ENCODE measurements at regions of chrX and their contacts with region 1.

Region 1: DNA sequence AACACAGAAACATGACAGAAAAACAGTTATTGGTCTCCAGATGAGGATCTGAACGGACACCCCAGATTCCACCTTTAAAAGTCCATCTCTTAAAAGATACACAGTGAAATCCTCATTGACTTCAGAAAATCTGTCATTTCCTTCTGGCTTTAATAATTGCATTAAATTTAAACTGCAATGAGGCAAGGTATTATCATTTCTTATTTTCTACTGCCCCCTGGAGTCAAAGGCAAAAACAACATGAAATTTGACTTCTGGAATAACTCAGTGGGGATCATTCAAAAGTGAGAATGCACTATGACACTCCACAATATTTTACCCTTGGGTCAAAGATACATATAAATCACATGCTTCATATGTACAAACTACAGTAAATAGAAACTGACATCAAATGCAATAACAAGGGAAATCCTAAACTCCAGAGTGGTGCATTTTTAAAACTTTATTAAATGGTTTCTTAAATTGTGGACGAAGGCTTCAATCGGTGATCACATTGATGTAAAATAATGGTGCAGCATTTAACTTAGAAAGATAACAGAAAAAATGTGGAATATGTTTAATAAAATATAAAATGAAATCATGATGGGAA is 56.4 kb upstream of the SPANXN1 start:
- DNase-seq: no peak
- ATAC-seq: peak; percentile 28; the same call in 1 of the 3 replicates
- H3K4me3 ChIP-seq: no peak overlapping the region
- H3K27ac ChIP-seq: no peak overlapping the region
- H3K4me1 ChIP-seq: no peaks in the 10 kb centered on the region
- H3K27me3 ChIP-seq: no peaks in the 10 kb centered on the region
- CTCF ChIP-seq: peak; percentile 33 to 50 (median 38); a peak in 4 of 6 replicates
- EP300 ChIP-seq: no peak
- POLR2A ChIP-seq: no peak
- RAD21 ChIP-seq: peak; percentile 66

Region 2: DNA sequence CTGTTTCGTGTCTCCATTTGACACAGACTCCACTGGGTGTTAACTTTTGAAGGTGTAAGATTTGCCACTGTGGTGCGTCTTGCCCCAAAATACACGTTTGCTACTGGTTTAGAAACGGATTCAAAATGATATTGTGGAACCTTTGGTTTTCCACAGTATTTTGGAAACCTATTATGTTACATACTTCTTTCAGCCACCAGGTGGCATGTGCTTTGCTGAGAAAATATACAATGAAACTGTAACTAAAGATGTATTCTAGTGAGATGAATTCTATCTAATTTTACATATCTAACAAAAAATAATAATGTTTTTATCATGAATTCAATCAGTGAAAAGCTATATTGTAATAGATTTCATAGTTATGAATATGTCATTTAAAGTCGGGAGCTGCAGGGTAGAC is 1526.6 kb before region 1 on chrX:
- CTCF ChIA-PET with region 1: no interaction called
- POLR2A ChIA-PET with region 1: no interaction called
- RAD21 ChIA-PET with region 1: no interaction called
- SMC1A ChIA-PET with region 1: no interaction called
- in situ Hi-C with region 1: loop called (anchors 5 kb)
- intact Hi-C with region 1: loop called (anchors 5 kb)
- DNase-seq: no peak
- ATAC-seq: peak; percentile 53; the same call in 2 of the 3 replicates
- H3K4me3 ChIP-seq: no peak overlapping the region
- H3K27ac ChIP-seq: no peak overlapping the region
- H3K4me1 ChIP-seq: no peaks in the 10 kb centered on the region
- H3K27me3 ChIP-seq: no peaks in the 10 kb centered on the region
- CTCF ChIP-seq: peak; percentile 41 to 52 (median 42); a peak in 5 of 6 replicates
- EP300 ChIP-seq: no peak
- POLR2A ChIP-seq: no peak
- RAD21 ChIP-seq: peak; percentile 46

Region 3: GRCh38 chrX:143669395-143669794 is 1521.5 kb before region 1 on chrX:
- CTCF ChIA-PET with region 1: no interaction called
- POLR2A ChIA-PET with region 1: no interaction called
- RAD21 ChIA-PET with region 1: no interaction called
- SMC1A ChIA-PET with region 1: no interaction called
- in situ Hi-C with region 1: loop called (anchors 5 kb)
- intact Hi-C with region 1: loop called (anchors 5 kb)
- DNase-seq: no peak
- ATAC-seq: no peak
- H3K4me3 ChIP-seq: no peak overlapping the region
- H3K27ac ChIP-seq: no peak overlapping the region
- H3K4me1 ChIP-seq: no peaks in the 10 kb centered on the region
- H3K27me3 ChIP-seq: no peaks in the 10 kb centered on the region
- CTCF ChIP-seq: peak in 2 of 3 experiments; percentile 2 to 13; a peak in 1 of 6 replicates
- EP300 ChIP-seq: no peak
- POLR2A ChIP-seq: no peak
- RAD21 ChIP-seq: no peak

Region 4: DNA sequence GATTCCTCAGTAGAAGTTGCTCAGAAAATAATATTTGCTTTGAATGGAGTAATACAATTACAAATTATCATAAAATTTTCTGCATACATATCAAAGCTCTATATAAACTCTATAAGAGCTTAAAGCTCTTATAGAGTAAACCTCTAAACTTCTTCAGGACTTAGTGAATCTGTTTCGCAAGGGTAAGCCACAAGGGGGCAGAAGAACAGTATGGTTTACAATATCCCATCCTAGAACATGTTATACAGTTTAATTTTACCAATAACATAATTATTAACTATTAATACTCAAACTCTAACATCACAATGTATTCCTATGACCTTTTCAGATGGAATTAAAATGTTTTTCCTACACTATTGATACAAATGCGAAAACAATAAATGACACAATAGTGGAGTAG is 22.6 kb after region 1 on chrX:
- CTCF ChIA-PET with region 1: no interaction called
- POLR2A ChIA-PET with region 1: no interaction called
- RAD21 ChIA-PET with region 1: no interaction called
- SMC1A ChIA-PET with region 1: no interaction called
- in situ Hi-C with region 1: no loop called
- intact Hi-C with region 1: no loop called
- DNase-seq: no peak
- ATAC-seq: peak; percentile 59; the same call in 2 of the 3 replicates
- H3K4me3 ChIP-seq: no peak overlapping the region
- H3K27ac ChIP-seq: no peak overlapping the region
- H3K4me1 ChIP-seq: no peaks in the 10 kb centered on the region
- H3K27me3 ChIP-seq: no peaks in the 10 kb centered on the region
- CTCF ChIP-seq: peak in 2 of 3 experiments; percentile 37 to 41; a peak in 4 of 6 replicates
- EP300 ChIP-seq: no peak
- POLR2A ChIP-seq: no peak
- RAD21 ChIP-seq: peak; percentile 42

Region 5: DNA sequence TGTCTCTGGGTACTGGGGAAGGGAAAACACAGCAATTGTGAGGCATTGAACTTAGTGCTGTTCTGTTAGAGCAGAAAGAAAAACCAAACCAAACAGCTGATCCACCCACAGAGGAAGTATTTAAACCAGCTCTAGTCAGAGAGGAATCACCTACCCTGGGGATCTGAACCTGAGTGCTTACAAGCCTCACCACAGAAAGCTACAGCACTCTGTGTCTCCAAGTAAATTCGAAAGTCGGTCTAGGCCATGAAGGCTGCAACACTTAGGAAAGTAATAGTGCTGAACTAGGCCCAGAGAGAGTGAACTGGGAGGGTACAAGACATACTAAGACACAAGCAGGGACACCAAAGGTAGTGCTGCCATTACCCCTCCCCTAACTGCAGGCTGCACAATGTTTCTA is 1765.9 kb after region 1 on chrX:
- CTCF ChIA-PET with region 1: no interaction called
- POLR2A ChIA-PET with region 1: no interaction called
- RAD21 ChIA-PET with region 1: no interaction called
- SMC1A ChIA-PET with region 1: no interaction called
- in situ Hi-C with region 1: no loop called
- intact Hi-C with region 1: no loop called
- DNase-seq: no peak
- ATAC-seq: no peak
- H3K4me3 ChIP-seq: no peak overlapping the region
- H3K27ac ChIP-seq: no peak overlapping the region
- H3K4me1 ChIP-seq: no peaks in the 10 kb centered on the region
- H3K27me3 ChIP-seq: no peaks in the 10 kb centered on the region
- CTCF ChIP-seq: no peak
- EP300 ChIP-seq: no peak
- POLR2A ChIP-seq: no peak
- RAD21 ChIP-seq: no peak

Measured in GM12878 (cell line).